OCI-LY7 (cell line): ENCODE measurements at regions of chr2 and their contacts with region 1.

Region 1: DNA sequence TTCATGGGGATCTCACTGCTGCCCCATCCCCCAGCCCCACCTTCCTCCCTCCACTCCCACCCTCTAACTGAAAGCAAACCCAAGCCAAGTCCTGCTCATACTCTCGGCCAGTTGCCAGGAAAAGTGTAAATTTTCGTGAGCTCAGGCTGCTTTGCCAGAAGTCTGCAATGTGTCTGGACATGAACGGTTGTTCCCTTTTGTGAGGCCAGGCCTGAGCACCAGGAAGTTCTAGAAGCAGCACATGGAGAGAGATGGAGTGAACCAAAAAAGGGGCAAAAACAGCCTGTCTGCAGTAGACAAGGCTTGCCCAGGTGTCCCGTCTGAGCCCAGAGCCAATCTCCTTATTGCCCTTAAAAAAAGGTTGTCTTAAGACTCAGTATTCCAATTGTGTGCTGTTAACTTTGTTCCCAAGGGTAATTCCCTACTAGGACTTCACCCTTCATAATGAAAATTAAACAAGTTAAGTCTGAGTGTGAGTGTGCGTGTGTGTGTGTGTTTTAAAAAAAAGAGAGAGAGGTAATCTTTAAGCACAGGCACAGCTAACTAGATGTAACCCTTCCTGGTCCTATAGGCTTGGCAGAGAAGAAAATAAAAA is 247.1 kb downstream of the BCL11A start:
- DNase-seq: no peak
- H3K4me3 ChIP-seq: no peak overlapping the region
- H3K27ac ChIP-seq: peak overlapping the region; percentile 2
- H3K4me1 ChIP-seq: peaks cover 88% of the 10 kb centered on the region
- CTCF ChIP-seq: no peak

Region 2: DNA sequence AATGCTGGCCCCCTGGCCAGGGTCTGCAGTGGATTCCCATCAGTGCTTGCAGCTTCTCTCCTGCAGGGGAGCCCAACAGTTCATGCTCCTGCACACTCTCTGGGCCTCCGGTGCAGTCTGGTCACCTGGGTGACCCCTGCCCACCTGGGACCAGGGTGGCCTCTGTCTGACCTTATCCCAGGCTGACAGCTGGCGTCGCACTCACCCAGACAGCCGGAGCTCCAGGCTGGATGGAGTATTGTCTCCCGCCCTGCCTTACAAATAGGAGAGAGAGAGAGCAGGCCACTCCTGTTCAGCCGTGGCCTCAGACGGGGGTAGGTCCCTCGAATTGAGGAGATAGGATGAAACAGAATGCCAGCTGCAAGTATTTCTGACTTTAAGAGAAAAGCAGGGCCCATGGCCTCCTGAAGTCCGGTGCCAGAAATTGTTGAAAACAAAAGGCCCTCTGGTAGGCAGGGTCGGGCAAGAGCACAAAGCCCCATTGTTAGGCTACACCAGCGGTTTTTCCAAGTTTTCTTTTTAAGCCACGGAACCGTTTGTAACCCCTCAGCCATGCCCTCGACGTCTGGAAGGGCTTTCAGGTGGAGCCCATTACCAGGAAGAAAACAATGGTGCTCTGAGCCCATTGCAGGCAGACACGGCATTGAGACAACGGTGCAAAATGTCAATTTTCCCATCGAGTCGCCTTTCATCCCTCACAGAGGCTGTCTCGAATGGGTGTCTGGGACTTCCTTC is 11.3 kb before region 1 on chr2:
- CTCF ChIA-PET with region 1: interaction called, 3 read pairs
- POLR2A ChIA-PET with region 1: interaction called, 28 read pairs
- intact Hi-C with region 1: no loop called
- DNase-seq: no peak
- H3K4me3 ChIP-seq: no peak overlapping the region
- H3K27ac ChIP-seq: no peak overlapping the region
- H3K4me1 ChIP-seq: no peaks in the 10 kb centered on the region
- CTCF ChIP-seq: no peak